Common myeloid progenitor, CD34-positive (primary cell): ENCODE measurements at regions of chr10 and their contacts with region 1.

Region 1: GRCh38 chr10:96339957-96340904 is 18.6 kb downstream of the OPALIN start:
- DNase-seq: peak; percentile 90 to 94 (median 93)
- H3K4me3 ChIP-seq: no peak overlapping the region
- H3K27ac ChIP-seq: no peak overlapping the region
- H3K4me1 ChIP-seq: peaks cover 0 to 22% (median 5%) of the 10 kb centered on the region in 4 experiments
- H3K27me3 ChIP-seq: no peaks in the 10 kb centered on the region

Region 2: DNA sequence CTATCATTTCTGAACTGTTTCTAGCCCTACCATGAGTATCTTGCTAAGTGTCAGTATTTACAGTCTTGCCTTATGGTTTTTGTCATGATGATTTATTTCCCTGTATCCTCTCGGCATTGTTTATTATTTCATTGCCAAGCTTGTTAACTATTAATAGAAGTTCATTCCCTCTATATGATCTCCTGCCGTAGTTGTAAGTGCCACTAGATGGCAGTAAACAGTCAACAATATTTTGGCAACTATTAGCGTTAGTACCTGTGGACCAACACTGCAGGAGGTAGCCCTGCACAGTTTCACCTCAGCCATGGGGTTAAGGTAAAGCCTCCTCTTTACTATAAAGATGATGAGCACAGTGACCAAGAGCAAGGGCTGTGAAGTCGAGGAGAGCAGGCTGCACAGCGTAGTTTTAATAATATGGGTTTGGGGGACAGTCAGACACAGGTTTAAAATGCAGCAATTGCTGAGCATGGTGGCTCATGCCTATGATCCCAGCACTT is 323.0 kb before region 1 on chr10:
- CTCF ChIA-PET with region 1: interaction called, 28 read pairs
- POLR2A ChIA-PET with region 1: no interaction called
- DNase-seq: peak; percentile 60 to 78 (median 70)
- H3K4me3 ChIP-seq: no peak overlapping the region
- H3K27ac ChIP-seq: no peak overlapping the region
- H3K4me1 ChIP-seq: peaks cover 0 to 5% (median 1%) of the 10 kb centered on the region in 4 experiments
- H3K27me3 ChIP-seq: no peaks in the 10 kb centered on the region

Region 3: GRCh38 chr10:96229568-96230030 is 110.6 kb before region 1 on chr10:
- CTCF ChIA-PET with region 1: interaction called, 43 read pairs
- POLR2A ChIA-PET with region 1: no interaction called
- DNase-seq: peak; percentile 90 to 96 (median 95)
- H3K4me3 ChIP-seq: no peak overlapping the region
- H3K27ac ChIP-seq: no peak overlapping the region
- H3K4me1 ChIP-seq: peaks cover 0 to 4% (median 2%) of the 10 kb centered on the region in 4 experiments
- H3K27me3 ChIP-seq: no peaks in the 10 kb centered on the region

Region 4: GRCh38 chr10:96292971-96293920 is 47.0 kb before region 1 on chr10:
- CTCF ChIA-PET with region 1: interaction called, 14 read pairs
- POLR2A ChIA-PET with region 1: no interaction called
- DNase-seq: peak; percentile 60 to 72 (median 72)
- H3K4me3 ChIP-seq: peak overlapping the region in 1 of 7 experiments; percentile 17
- H3K27ac ChIP-seq: no peak overlapping the region
- H3K4me1 ChIP-seq: peaks cover 2 to 44% (median 23%) of the 10 kb centered on the region in 4 experiments
- H3K27me3 ChIP-seq: peaks cover 0 to 2% (median 0%) of the 10 kb centered on the region in 5 experiments

Region 5: DNA sequence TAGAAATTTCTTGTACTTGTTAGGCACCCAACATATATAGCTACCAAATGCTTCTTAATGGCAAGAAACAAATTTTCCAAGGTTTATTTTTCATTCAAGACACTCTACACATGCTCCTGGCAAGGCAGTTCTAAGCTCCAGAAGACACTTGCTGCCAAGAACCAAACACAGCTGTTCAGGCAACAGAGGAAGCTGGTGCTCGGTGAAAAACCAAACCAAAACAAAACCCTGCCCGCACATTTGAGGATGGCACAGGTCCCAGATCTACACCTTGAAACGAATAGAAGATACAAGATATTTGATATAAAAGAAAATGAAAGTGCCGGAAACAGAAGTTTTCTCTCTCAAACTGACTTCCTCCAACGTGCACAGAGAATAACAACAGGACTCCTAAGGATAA is 40.8 kb before region 1 on chr10:
- CTCF ChIA-PET with region 1: interaction called, 14 read pairs
- POLR2A ChIA-PET with region 1: no interaction called
- DNase-seq: peak; percentile 36 to 89 (median 85)
- H3K4me3 ChIP-seq: peak overlapping the region in 4 of 7 experiments; percentile 19 to 32 (median 23)
- H3K27ac ChIP-seq: peak overlapping the region; percentile 21 to 50
- H3K4me1 ChIP-seq: peaks cover 0 to 80% (median 39%) of the 10 kb centered on the region in 4 experiments
- H3K27me3 ChIP-seq: peaks cover 0 to 4% (median 0%) of the 10 kb centered on the region in 5 experiments

Region 6: GRCh38 chr10:96570983-96571964 is 231.0 kb after region 1 on chr10:
- CTCF ChIA-PET with region 1: no interaction called
- POLR2A ChIA-PET with region 1: no interaction called
- DNase-seq: no peak
- H3K4me3 ChIP-seq: no peak overlapping the region
- H3K27ac ChIP-seq: no peak overlapping the region
- H3K4me1 ChIP-seq: peaks cover 0 to under 1% (median 0%) of the 10 kb centered on the region in 4 experiments
- H3K27me3 ChIP-seq: no peaks in the 10 kb centered on the region